ENCODE measurements at regions of chr17 and their contacts with region 1.

Region 1: DNA sequence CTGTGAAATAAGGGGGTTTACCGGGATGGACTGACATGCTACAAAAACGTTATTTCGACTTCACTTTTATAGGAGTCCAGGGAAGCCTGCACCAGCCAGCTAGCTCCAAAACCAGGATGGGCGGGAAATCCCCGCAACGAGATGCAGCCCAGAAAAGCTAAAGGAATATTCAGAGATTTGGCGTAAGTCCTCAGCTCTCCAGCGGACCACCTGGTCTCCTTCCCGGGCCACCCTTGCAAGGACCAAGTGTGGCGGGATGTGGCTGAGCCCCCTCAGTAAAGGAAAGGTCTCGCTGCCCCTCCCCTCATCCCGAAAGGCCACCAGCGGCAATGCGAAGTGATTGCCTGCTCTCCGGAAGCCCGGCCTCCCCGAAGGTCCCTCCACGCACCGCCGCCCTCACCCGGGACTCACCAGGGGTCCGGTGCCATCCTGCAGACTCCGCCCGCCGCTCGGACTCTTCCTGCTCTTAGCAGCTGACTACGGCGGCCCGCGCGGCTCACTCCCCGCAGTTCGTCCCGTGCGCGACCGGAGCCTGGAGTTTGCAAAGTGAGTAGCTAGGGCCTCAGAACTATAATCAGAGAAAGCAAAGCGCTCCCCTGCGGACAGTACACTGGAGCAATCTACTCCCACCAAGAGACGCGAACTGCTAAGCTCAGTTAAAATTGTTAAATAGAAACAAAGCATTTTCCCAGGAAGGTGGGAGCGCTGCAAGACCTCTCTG is at the start of gene STX8:
- DNase-seq: peak; percentile 92
- H3K4me3 ChIP-seq: peak within 1 kb of the TSS; percentile 64
- H3K27ac ChIP-seq: peak within 1 kb of the TSS; percentile 15
- H3K4me1 ChIP-seq: peaks cover 11% of the 10 kb centered on the region
- H3K27me3 ChIP-seq: no peaks in the 10 kb centered on the region
- CTCF ChIP-seq: 0 out of 2 replicates have a peak, but pooled peaks have one; percentile 17
- total RNA-seq, gene STX8: 51.4 and 56.4 TPM in 2 replicates

Region 2: GRCh38 chr17:9050801-9051401 is 524.6 kb before region 1 on chr17:
- CTCF ChIA-PET with region 1: no interaction called
- POLR2A ChIA-PET with region 1: no interaction called
- intact Hi-C with region 1: no loop called
- DNase-seq: no peak
- H3K4me3 ChIP-seq: no peak overlapping the region
- H3K27ac ChIP-seq: no peak overlapping the region
- H3K4me1 ChIP-seq: no peaks in the 10 kb centered on the region
- H3K27me3 ChIP-seq: no peaks in the 10 kb centered on the region
- CTCF ChIP-seq: no peak

Region 3: DNA sequence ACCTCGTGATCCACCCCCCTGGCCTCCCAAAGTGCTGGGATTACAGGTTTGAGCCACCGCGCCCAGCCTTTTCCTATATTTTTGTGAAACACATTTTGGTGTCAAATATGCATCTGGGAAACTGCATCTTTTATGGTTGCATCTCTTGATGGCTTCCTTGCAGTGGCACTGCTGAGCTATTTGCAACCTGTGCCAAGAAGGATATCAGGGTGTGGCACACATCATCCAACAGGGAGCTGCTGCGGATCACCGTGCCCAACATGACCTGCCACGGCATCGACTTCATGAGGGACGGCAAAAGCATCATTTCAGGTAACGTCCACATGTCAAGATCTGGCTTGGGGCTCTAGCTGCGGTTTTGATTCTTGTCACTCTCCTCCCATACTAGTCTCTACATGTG is 53.0 kb after region 1 on chr17:
- CTCF ChIA-PET with region 1: no interaction called
- POLR2A ChIA-PET with region 1: no interaction called
- intact Hi-C with region 1: no loop called
- DNase-seq: no peak
- H3K4me3 ChIP-seq: no peak overlapping the region
- H3K27ac ChIP-seq: no peak overlapping the region
- H3K4me1 ChIP-seq: no peaks in the 10 kb centered on the region
- H3K27me3 ChIP-seq: no peaks in the 10 kb centered on the region
- CTCF ChIP-seq: no peak

Region 4: DNA sequence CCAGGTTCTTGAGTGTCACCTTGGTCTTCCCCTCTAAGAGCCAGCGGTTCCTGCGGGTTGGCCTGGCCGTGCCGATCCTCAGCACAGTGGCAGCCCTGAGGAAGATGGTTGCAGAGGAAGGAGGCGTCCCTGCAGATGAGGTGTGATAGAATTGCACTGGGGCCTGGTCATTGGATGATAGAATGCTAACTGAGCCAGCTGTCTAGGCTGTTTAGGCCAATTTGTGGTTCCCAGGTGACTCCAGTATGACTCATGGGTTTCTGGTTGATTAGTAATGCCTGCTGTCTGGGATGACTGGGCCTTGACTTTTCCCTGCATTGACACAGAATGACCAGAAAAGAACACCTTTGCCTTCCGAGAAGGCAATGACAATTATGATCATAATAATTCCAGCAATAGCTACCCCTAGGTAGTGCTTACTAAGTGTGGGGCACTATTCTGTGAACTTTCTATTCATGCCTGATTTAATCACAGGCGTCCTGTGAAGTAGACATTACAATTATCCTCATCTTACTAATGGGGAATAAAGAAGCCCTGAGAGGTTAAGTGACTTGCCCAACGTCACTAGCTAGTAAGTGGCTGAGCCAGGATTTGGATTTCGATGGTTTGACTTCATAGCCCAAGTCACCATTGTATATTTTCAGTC is 101.3 kb after region 1 on chr17:
- CTCF ChIA-PET with region 1: no interaction called
- POLR2A ChIA-PET with region 1: no interaction called
- intact Hi-C with region 1: loop called (anchors 1 kb)
- DNase-seq: no peak
- H3K4me3 ChIP-seq: no peak overlapping the region
- H3K27ac ChIP-seq: no peak overlapping the region
- H3K4me1 ChIP-seq: no peaks in the 10 kb centered on the region
- H3K27me3 ChIP-seq: peaks cover 8% of the 10 kb centered on the region
- CTCF ChIP-seq: no peak

Region 5: GRCh38 chr17:9743096-9743495 is 167.6 kb after region 1 on chr17:
- CTCF ChIA-PET with region 1: interaction called, 10 read pairs
- POLR2A ChIA-PET with region 1: no interaction called
- intact Hi-C with region 1: loop called (anchors 5 kb)
- DNase-seq: no peak
- H3K4me3 ChIP-seq: no peak overlapping the region
- H3K27ac ChIP-seq: no peak overlapping the region
- H3K4me1 ChIP-seq: no peaks in the 10 kb centered on the region
- H3K27me3 ChIP-seq: peaks cover 12% of the 10 kb centered on the region
- CTCF ChIP-seq: no peak